GM10248 (cell line): ENCODE measurements at regions of chr5 and their contacts with region 1.

Region 1: GRCh38 chr5:112419986-112420864 is 1.1 kb upstream of the EPB41L4A start:
- DNase-seq: peak; percentile 83
- CTCF ChIP-seq: peak; percentile 91

Region 2: GRCh38 chr5:111757355-111758283 is 662.6 kb before region 1 on chr5:
- CTCF ChIA-PET with region 1: no interaction called
- POLR2A ChIA-PET with region 1: no interaction called
- DNase-seq: peak; percentile 83
- CTCF ChIP-seq: peak; percentile 12

Region 3: GRCh38 chr5:112174959-112175594 is 245.1 kb before region 1 on chr5:
- CTCF ChIA-PET with region 1: interaction called, 115 read pairs
- POLR2A ChIA-PET with region 1: no interaction called
- DNase-seq: peak; percentile 48
- CTCF ChIP-seq: peak; percentile 51

Region 4: DNA sequence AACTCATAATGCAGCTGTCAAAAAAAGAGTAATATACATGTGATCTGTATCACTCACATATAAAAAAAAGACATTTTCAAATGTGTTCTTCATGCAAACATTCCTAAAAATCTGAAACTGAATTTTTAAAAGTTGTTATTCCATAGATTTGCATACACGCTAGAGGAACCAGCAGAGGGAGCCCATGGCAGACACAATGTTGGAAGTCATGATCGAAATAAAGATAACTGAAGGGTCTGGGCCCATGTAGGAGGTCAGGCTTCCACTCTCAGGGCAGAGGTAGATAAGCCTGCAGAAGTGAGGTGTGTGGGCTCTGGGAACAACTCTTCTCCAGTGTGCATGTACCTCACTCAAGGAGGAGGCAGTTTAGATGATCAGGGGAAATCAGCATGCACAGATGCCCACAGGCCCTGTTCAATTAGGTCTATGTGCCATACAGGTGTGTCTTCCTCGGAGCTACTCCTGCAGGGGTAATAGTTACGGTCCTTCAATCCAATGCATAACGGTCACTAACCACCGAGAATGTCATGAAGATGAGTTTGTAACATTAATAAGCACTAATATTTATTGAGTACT is 209.7 kb before region 1 on chr5:
- CTCF ChIA-PET with region 1: interaction called, 21 read pairs
- POLR2A ChIA-PET with region 1: no interaction called
- DNase-seq: peak; percentile 13
- CTCF ChIP-seq: peak; percentile 55

Region 5: DNA sequence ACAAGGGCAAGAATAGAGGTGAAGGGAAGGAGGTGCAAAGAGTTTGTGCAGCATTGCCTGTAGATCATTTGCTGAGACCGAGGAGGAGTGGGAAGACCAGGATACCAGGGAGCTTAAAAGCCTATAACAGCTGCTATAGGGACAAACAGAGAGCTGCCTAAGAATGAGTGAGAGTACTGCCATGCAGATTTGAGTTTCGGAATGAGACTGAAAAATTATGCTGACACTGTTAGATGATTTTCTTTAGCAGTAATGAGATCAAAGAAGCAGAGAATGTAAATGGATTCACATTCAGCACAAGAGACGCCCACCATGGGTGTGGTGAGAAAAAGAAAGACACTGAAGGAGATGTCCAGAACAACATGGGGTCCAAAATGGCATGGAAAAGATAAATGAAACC is 70.9 kb before region 1 on chr5:
- CTCF ChIA-PET with region 1: interaction called, 10 read pairs
- POLR2A ChIA-PET with region 1: no interaction called
- DNase-seq: no peak
- CTCF ChIP-seq: no peak

Region 6: DNA sequence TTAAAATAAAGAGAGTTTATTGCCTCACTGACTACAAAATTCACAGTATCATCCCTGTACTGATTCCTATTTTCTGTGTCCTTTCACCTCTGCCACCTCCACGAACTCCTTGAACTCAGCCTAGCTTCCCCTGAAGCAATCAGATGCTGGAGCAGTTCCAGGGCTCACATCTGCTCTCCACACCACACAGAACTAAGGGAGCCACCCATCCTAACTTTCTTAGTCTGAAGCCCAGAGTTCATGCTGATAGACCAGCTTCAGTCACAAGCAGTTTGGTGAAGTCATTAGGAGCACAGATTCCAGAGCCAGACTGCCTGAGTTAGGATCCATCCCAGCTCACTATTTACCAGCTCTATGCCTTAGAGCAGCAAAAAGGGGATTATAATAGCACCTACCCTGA is 14.4 kb after region 1 on chr5:
- CTCF ChIA-PET with region 1: interaction called, 57 read pairs
- POLR2A ChIA-PET with region 1: no interaction called
- DNase-seq: no peak
- CTCF ChIP-seq: no peak